WTC11 (cell line): ENCODE measurements at regions of chr4 and their contacts with region 1.

Region 1: GRCh38 chr4:81698538-81699296 is 227.0 kb upstream of the RASGEF1B start:
- DNase-seq: no peak
- ATAC-seq: peak; percentile 36; the same call in 1 of the 2 replicates
- H3K4me3 Mint-ChIP-seq: no peak overlapping the region
- H3K27ac Mint-ChIP-seq: no peak overlapping the region
- H3K4me1 Mint-ChIP-seq: no peaks in the 10 kb centered on the region
- H3K27me3 Mint-ChIP-seq: no peaks in the 10 kb centered on the region
- CTCF ChIP-seq: no peak

Region 2: GRCh38 chr4:81688085-81688484 is 10.6 kb before region 1 on chr4:
- CTCF ChIA-PET with region 1: interaction called, 10 read pairs
- POLR2A ChIA-PET with region 1: no interaction called
- DNase-seq: no peak
- ATAC-seq: peak; percentile 80
- H3K4me3 Mint-ChIP-seq: no peak overlapping the region
- H3K27ac Mint-ChIP-seq: no peak overlapping the region
- H3K4me1 Mint-ChIP-seq: peaks cover 13% of the 10 kb centered on the region
- H3K27me3 Mint-ChIP-seq: no peaks in the 10 kb centered on the region
- CTCF ChIP-seq: no peak

Region 3: GRCh38 chr4:81930506-81931238 is 232.0 kb after region 1 on chr4:
- CTCF ChIA-PET with region 1: no interaction called
- POLR2A ChIA-PET with region 1: no interaction called
- DNase-seq: no peak
- ATAC-seq: no peak
- H3K4me3 Mint-ChIP-seq: no peak overlapping the region
- H3K27ac Mint-ChIP-seq: no peak overlapping the region
- H3K4me1 Mint-ChIP-seq: no peaks in the 10 kb centered on the region
- H3K27me3 Mint-ChIP-seq: no peaks in the 10 kb centered on the region; the same call in none of the 2 replicates
- CTCF ChIP-seq: no peak